T-cell (primary cell): ENCODE measurements at regions of chr6 and their contacts with region 1.

Region 1: GRCh38 chr6:130885392-130886192 is 58.4 kb downstream of the SMLR1 start:
- DNase-seq: peak; percentile 25 to 89 (median 66)
- ATAC-seq: peak; percentile 75 to 93 (median 84)
- H3K4me3 ChIP-seq: no peak overlapping the region
- H3K4me3 Mint-ChIP-seq: no peak overlapping the region
- H3K27ac ChIP-seq: no peak overlapping the region
- H3K27ac Mint-ChIP-seq: no peak overlapping the region
- H3K4me1 ChIP-seq: no peaks in the 10 kb centered on the region
- H3K4me1 Mint-ChIP-seq: no peaks in the 10 kb centered on the region
- H3K27me3 ChIP-seq: no peaks in the 10 kb centered on the region
- H3K27me3 Mint-ChIP-seq: no peaks in the 10 kb centered on the region

Region 2: DNA sequence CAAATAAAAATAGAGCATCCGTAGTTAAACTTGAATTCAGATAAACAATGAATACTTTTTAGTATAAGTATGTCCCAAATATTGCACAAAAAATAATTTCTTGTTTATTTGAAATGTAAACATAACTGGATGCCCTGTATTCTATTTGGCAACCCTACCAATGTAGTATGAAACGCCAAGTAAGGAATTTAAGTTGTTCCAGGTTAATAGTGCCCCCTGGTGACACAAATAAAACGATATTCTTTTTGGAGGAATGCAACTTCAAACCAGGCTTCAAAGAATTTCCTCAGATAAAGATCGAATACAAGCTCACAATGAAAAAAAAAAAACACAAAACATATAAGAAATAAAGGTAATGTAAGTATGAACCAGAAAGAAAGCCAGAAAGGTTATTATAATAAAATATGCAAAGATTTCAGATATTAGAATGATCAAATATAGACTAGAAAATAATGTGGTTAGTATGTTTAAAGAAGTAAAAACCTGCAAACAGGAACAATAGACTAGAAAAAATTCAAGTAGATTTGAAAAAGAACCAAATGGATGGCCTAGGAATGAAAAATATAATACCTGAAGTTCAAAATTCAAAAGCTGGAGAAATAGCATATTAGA is 231.3 kb after region 1 on chr6:
- CTCF ChIA-PET with region 1: interaction called, 32 to 60 read pairs
- POLR2A ChIA-PET with region 1: interaction called in 1 of 2 experiments, 3 read pairs
- DNase-seq: peak in 1 of 35 experiments; percentile 67
- ATAC-seq: no peak
- H3K4me3 ChIP-seq: no peak overlapping the region
- H3K4me3 Mint-ChIP-seq: no peak overlapping the region
- H3K27ac ChIP-seq: no peak overlapping the region
- H3K27ac Mint-ChIP-seq: no peak overlapping the region
- H3K4me1 ChIP-seq: no peaks in the 10 kb centered on the region
- H3K4me1 Mint-ChIP-seq: no peaks in the 10 kb centered on the region
- H3K27me3 ChIP-seq: no peaks in the 10 kb centered on the region
- H3K27me3 Mint-ChIP-seq: peaks cover 0 to 3% of the 10 kb centered on the region in 2 donors

Region 3: GRCh38 chr6:131244942-131245341 is 359.4 kb after region 1 on chr6:
- CTCF ChIA-PET with region 1: no interaction called
- POLR2A ChIA-PET with region 1: no interaction called
- DNase-seq: no peak
- ATAC-seq: no peak
- H3K4me3 ChIP-seq: no peak overlapping the region
- H3K4me3 Mint-ChIP-seq: no peak overlapping the region
- H3K27ac ChIP-seq: no peak overlapping the region
- H3K27ac Mint-ChIP-seq: peak overlapping the region; percentile 55 to 63
- H3K4me1 ChIP-seq: peaks cover 0 to 4% of the 10 kb centered on the region in 2 experiments
- H3K4me1 Mint-ChIP-seq: peaks cover 23 to 48% (median 42%) of the 10 kb centered on the region in 3 donors
- H3K27me3 ChIP-seq: no peaks in the 10 kb centered on the region
- H3K27me3 Mint-ChIP-seq: no peaks in the 10 kb centered on the region

Region 4: GRCh38 chr6:131627724-131628682 is 742.4 kb after region 1 on chr6 and contains the start of gene MED23:
- CTCF ChIA-PET with region 1: interaction called, 4 to 18 read pairs
- POLR2A ChIA-PET with region 1: interaction called, 5 read pairs
- DNase-seq: peak; percentile 81 to 98 (median 91)
- ATAC-seq: peak; percentile 93 to 98 (median 96)
- H3K4me3 ChIP-seq: peak within 1 kb of the TSS; percentile 84 to 92
- H3K4me3 Mint-ChIP-seq: peak within 1 kb of the TSS; percentile 94 to 99 (median 98)
- H3K27ac ChIP-seq: peak within 1 kb of the TSS; percentile 58
- H3K27ac Mint-ChIP-seq: peak within 1 kb of the TSS; percentile 95 to 96
- H3K4me1 ChIP-seq: peaks cover 6 to 15% of the 10 kb centered on the region in 2 experiments
- H3K4me1 Mint-ChIP-seq: peaks cover 38 to 44% (median 39%) of the 10 kb centered on the region in 3 donors
- H3K27me3 ChIP-seq: no peaks in the 10 kb centered on the region
- H3K27me3 Mint-ChIP-seq: no peaks in the 10 kb centered on the region
- total RNA-seq, gene MED23: 45.6 to 64.5 (median 46.6) TPM